IMR-90 (cell line): ENCODE measurements at regions of chr17 and their contacts with region 1.

Region 1: GRCh38 chr17:49567871-49568694 is 7.6 kb upstream of the NXPH3 start:
- DNase-seq: peak; percentile 66
- ATAC-seq: peak; percentile 94
- H3K4me3 ChIP-seq: peak overlapping the region; percentile 25
- H3K27ac ChIP-seq: no peak overlapping the region
- H3K4me1 ChIP-seq: no peaks in the 10 kb centered on the region
- H3K27me3 ChIP-seq: peaks cover 44% of the 10 kb centered on the region
- CTCF ChIP-seq: peak; percentile 98
- POLR2A ChIP-seq: 0 out of 2 replicates have a peak, but pooled peaks have one; percentile 43
- RAD21 ChIP-seq: peak; percentile 98

Region 2: GRCh38 chr17:49694847-49695683 is 127.0 kb after region 1 on chr17:
- CTCF ChIA-PET with region 1: interaction called, 16 read pairs
- POLR2A ChIA-PET with region 1: no interaction called
- dilution Hi-C with region 1: no loop called
- in situ Hi-C with region 1: loop called (anchors 5 kb)
- intact Hi-C with region 1: loop called (anchors 1 kb)
- DNase-seq: no peak
- ATAC-seq: peak; percentile 79
- H3K4me3 ChIP-seq: no peak overlapping the region
- H3K27ac ChIP-seq: no peak overlapping the region
- H3K4me1 ChIP-seq: no peaks in the 10 kb centered on the region
- H3K27me3 ChIP-seq: peaks cover 4% of the 10 kb centered on the region
- CTCF ChIP-seq: peak; percentile 95
- POLR2A ChIP-seq: no peak
- RAD21 ChIP-seq: peak; percentile 93

Region 3: DNA sequence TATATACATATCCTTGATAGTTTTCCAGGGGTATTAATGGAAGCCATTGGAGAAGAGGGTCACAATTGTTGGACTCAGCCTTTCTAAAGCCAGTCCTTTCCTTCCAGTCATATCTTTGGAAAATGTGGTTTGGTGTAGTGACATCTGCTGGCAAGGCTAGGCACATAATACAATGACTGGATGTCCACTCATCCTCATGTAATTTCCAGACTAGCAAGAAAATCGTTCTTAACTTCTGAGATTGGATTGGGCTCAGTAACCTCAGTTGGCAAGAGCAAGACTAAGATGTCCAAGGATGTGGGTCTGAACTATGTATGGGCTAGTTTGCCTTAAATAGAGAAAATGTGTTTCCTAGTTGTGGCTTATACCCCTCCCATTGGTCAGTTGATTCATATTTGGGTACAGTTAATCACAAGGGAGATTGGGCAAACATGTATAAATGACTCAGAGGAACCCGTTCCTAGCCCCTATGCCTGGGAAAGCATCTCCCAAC is 211.7 kb after region 1 on chr17:
- CTCF ChIA-PET with region 1: no interaction called
- POLR2A ChIA-PET with region 1: no interaction called
- dilution Hi-C with region 1: no loop called
- in situ Hi-C with region 1: loop called (anchors 10 kb)
- intact Hi-C with region 1: loop called (anchors 1 kb)
- DNase-seq: peak; percentile 84
- ATAC-seq: peak; percentile 91
- H3K4me3 ChIP-seq: no peak overlapping the region
- H3K27ac ChIP-seq: no peak overlapping the region
- H3K4me1 ChIP-seq: no peaks in the 10 kb centered on the region
- H3K27me3 ChIP-seq: peaks cover 2% of the 10 kb centered on the region; the same call in 1 of the 2 replicates
- CTCF ChIP-seq: peak; percentile 67
- POLR2A ChIP-seq: no peak
- RAD21 ChIP-seq: peak; percentile 59

Region 4: GRCh38 chr17:49788478-49789242 is 220.6 kb after region 1 on chr17 and contains the start of gene KAT7:
- CTCF ChIA-PET with region 1: no interaction called
- POLR2A ChIA-PET with region 1: no interaction called
- dilution Hi-C with region 1: no loop called
- in situ Hi-C with region 1: loop called (anchors 10 kb)
- intact Hi-C with region 1: no loop called
- DNase-seq: peak; percentile 99
- ATAC-seq: peak; percentile 91
- H3K4me3 ChIP-seq: peak within 1 kb of the TSS; percentile 74
- H3K27ac ChIP-seq: peak within 1 kb of the TSS; percentile 89
- H3K4me1 ChIP-seq: peaks cover 7% of the 10 kb centered on the region
- H3K27me3 ChIP-seq: no peaks in the 10 kb centered on the region
- CTCF ChIP-seq: 0 out of 2 replicates have a peak, but pooled peaks have one; percentile 5
- POLR2A ChIP-seq: peak; percentile 88
- RAD21 ChIP-seq: no peak
- total RNA-seq, gene KAT7: 20.6 and 21.9 TPM in 2 replicates

Region 5: DNA sequence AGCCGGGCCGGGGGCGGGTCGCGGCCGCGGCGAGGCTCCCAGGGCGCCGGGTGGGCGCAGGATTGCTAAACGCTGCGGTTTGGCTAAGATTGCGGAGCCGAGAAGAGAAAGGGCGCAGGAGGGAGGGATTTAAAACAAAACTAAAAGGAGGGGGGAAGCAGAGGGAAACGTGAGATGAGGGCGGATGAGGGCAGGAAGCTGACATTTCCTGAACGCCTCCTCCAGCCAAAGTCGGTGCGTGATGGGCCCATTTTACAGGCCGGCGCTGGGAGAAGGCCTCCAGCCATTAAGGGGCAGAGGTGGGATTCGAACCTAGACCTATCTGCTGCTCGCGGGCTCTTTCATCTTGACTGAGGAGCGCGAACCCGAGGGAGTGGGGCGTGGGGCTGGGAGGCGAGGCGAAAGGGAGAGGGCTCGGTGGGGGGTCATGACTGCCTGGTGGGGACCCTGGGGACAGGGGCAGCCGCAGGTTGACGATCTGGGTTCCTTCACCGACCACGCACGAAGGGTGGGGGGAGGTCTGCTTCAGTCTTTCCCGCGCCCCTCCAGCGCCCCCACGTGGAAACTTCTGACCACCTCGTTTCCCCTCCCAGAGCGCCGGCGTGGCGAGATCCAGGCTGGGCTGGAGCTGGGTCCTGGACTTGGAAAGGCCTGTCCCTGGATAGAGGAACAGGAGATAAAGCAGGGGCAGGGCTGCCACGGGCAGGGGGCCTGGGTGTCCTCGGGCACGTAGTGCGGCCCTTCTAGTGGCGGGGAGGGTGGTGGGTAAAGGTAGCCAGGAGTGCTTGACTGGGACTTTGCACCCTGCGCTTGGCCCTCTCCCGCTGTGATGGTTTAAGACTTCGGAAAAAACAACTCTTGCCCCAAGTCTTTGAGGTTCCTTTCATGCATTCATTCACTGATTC is 283.6 kb after region 1 on chr17:
- CTCF ChIA-PET with region 1: interaction called, 5 read pairs
- POLR2A ChIA-PET with region 1: no interaction called
- dilution Hi-C with region 1: no loop called
- in situ Hi-C with region 1: loop called (anchors 5 kb)
- intact Hi-C with region 1: loop called (anchors 1 kb)
- DNase-seq: peak; percentile 59
- ATAC-seq: peak; percentile 85
- H3K4me3 ChIP-seq: peak overlapping the region; percentile 39
- H3K27ac ChIP-seq: no peak overlapping the region
- H3K4me1 ChIP-seq: peaks cover 3% of the 10 kb centered on the region; the same call in 1 of the 2 replicates
- H3K27me3 ChIP-seq: peaks cover 23% of the 10 kb centered on the region; the same call in 1 of the 2 replicates
- CTCF ChIP-seq: peak; percentile 77
- POLR2A ChIP-seq: no peak
- RAD21 ChIP-seq: peak; percentile 77